Gastrocnemius medialis (tissue), 4 donors: ENCODE measurements at regions of chr3 and their contacts with region 1.

Region 1: DNA sequence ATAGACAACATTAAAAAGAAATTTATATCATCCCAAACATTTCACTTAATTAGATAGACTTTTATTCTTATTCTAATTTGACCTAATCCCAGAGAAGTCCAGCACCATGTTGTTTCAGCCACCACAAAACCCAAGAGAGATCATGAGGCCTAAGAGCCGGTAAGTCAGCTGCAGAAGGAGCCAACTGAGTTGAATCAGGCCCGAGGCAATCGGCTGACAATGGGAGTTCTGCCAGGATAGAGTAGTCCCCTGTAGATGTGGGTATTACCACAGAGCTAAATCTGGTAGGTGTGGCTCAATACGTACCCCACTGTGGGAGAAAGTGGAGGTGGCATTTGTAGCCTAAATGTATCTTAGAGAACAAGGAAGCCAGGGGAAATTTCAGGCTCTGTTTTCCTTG is 49.7 kb upstream of the UMPS start:
- DNase-seq: no peak
- ATAC-seq: no peak
- H3K4me3 ChIP-seq: no peak overlapping the region
- H3K27ac ChIP-seq: no peak overlapping the region
- H3K4me1 ChIP-seq: peaks cover 0 to 6% of the 10 kb centered on the region in 2 donors
- H3K27me3 ChIP-seq: no peaks in the 10 kb centered on the region
- CTCF ChIP-seq: no peak
- POLR2A ChIP-seq: no peak

Region 2: GRCh38 chr3:124569761-124570160 is 110.8 kb before region 1 on chr3:
- in situ Hi-C with region 1: loop called (anchors 5 kb)
- intact Hi-C with region 1: no loop called
- DNase-seq: no peak
- ATAC-seq: no peak
- H3K4me3 ChIP-seq: no peak overlapping the region
- H3K27ac ChIP-seq: no peak overlapping the region
- H3K4me1 ChIP-seq: peaks cover 0 to 12% of the 10 kb centered on the region in 2 donors
- H3K27me3 ChIP-seq: no peaks in the 10 kb centered on the region
- CTCF ChIP-seq: no peak
- POLR2A ChIP-seq: no peak